ENCODE measurements at regions of chr1 and their contacts with region 1.

Region 1: DNA sequence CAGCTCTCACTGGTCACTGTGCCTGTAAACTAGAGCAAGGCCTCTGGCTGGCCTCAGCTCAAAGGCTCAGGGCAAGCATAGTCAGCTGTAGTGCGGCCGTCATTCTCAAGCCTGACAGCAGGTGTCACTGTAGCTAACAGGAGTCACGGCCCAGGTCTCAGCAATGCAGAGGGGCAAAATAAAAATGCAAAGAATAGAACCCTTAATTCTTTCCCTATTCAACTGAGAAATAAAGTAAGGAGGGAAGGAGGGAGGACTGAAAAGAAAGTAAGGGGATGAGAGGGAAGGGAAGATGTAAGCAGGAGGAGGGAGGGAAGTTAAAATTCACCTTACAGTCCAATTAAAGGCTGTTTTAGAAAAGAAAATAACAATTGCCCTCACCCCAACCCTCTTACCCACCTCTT is 106.1 kb downstream of the KIAA0319L start:
- DNase-seq: peak; percentile 63 to 69
- H3K4me3 ChIP-seq: no peak overlapping the region
- H3K4me3 Mint-ChIP-seq: no peak overlapping the region
- H3K27ac Mint-ChIP-seq: no peak overlapping the region
- H3K4me1 ChIP-seq: no peaks in the 10 kb centered on the region
- H3K4me1 Mint-ChIP-seq: no peaks in the 10 kb centered on the region
- H3K27me3 ChIP-seq: no peaks in the 10 kb centered on the region
- H3K27me3 Mint-ChIP-seq: no peaks in the 10 kb centered on the region
- CTCF ChIP-seq: peak; percentile 69 to 72

Region 2: DNA sequence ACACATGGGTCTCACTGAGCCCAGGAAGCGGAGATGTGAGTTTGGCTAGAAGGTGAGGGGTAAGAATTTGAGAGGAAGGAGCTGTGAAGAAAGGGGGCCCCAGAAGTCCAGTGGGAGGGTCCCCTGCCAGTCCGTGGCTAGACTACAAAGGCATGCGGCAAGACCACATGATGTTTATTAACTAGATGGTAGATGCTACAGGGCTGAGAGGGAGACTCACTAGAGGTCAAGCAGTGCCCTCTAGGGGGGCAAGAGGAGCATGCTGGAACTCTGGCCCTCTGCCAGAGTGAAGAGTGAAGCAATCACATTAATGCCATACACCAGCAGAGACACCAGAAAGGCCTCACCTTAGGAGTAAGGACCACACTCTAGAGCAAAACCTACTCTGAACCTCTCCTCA is 93.9 kb after region 1 on chr1:
- CTCF ChIA-PET with region 1: interaction called, 16 read pairs
- POLR2A ChIA-PET with region 1: no interaction called
- intact Hi-C with region 1: loop called (anchors 1 kb)
- DNase-seq: peak; percentile 56 to 66
- H3K4me3 ChIP-seq: no peak overlapping the region
- H3K4me3 Mint-ChIP-seq: no peak overlapping the region
- H3K27ac Mint-ChIP-seq: no peak overlapping the region
- H3K4me1 ChIP-seq: no peaks in the 10 kb centered on the region
- H3K4me1 Mint-ChIP-seq: peaks cover 8% of the 10 kb centered on the region
- H3K27me3 ChIP-seq: no peaks in the 10 kb centered on the region
- H3K27me3 Mint-ChIP-seq: no peaks in the 10 kb centered on the region
- CTCF ChIP-seq: peak; percentile 37 to 60